ENCODE measurements at regions of chr5 and their contacts with region 1.

Region 1: GRCh38 chr5:116137544-116138378 is 52.9 kb downstream of the COMMD10 start:
- DNase-seq: peak; percentile 12
- ATAC-seq: peak; percentile 72
- H3K4me3 ChIP-seq: no peak overlapping the region
- H3K27ac ChIP-seq: no peak overlapping the region
- H3K4me1 ChIP-seq: peaks cover 3% of the 10 kb centered on the region; the same call in 1 of the 2 replicates
- H3K27me3 ChIP-seq: no peaks in the 10 kb centered on the region
- CTCF ChIP-seq: peak; percentile 55 to 70 (median 62); a peak in 5 of 6 replicates
- EP300 ChIP-seq: no peak
- POLR2A ChIP-seq: no peak
- RAD21 ChIP-seq: peak; percentile 95

Region 2: GRCh38 chr5:116062352-116062751 is 75.4 kb before region 1 on chr5:
- CTCF ChIA-PET with region 1: no interaction called
- POLR2A ChIA-PET with region 1: no interaction called
- RAD21 ChIA-PET with region 1: no interaction called
- SMC1A ChIA-PET with region 1: no interaction called
- in situ Hi-C with region 1: no loop called
- intact Hi-C with region 1: no loop called
- DNase-seq: no peak
- ATAC-seq: no peak
- H3K4me3 ChIP-seq: no peak overlapping the region
- H3K27ac ChIP-seq: no peak overlapping the region
- H3K4me1 ChIP-seq: no peaks in the 10 kb centered on the region
- H3K27me3 ChIP-seq: no peaks in the 10 kb centered on the region; a peak in 2 of 4 replicates
- CTCF ChIP-seq: no peak
- EP300 ChIP-seq: no peak
- POLR2A ChIP-seq: no peak
- RAD21 ChIP-seq: peak; percentile 14; the same call in 1 of the 2 replicates

Region 3: GRCh38 chr5:116273448-116274207 is 135.9 kb after region 1 on chr5:
- CTCF ChIA-PET with region 1: interaction called, 36 read pairs
- POLR2A ChIA-PET with region 1: no interaction called
- RAD21 ChIA-PET with region 1: interaction called, 11 read pairs
- SMC1A ChIA-PET with region 1: interaction called, 39 read pairs
- in situ Hi-C with region 1: no loop called
- intact Hi-C with region 1: loop called (anchors 1 kb)
- DNase-seq: peak; percentile 43
- ATAC-seq: peak; percentile 90
- H3K4me3 ChIP-seq: no peak overlapping the region
- H3K27ac ChIP-seq: no peak overlapping the region
- H3K4me1 ChIP-seq: no peaks in the 10 kb centered on the region
- H3K27me3 ChIP-seq: no peaks in the 10 kb centered on the region
- CTCF ChIP-seq: no peak
- EP300 ChIP-seq: peak; percentile 36 to 68; a peak in 1 of 4 replicates
- POLR2A ChIP-seq: no peak
- RAD21 ChIP-seq: no peak

Region 4: GRCh38 chr5:116374434-116374852 is 236.7 kb after region 1 on chr5:
- CTCF ChIA-PET with region 1: interaction called, 16 read pairs
- POLR2A ChIA-PET with region 1: no interaction called
- RAD21 ChIA-PET with region 1: interaction called, 21 read pairs
- SMC1A ChIA-PET with region 1: interaction called, 58 read pairs
- in situ Hi-C with region 1: no loop called
- intact Hi-C with region 1: no loop called
- DNase-seq: peak; percentile 64
- ATAC-seq: peak; percentile 82
- H3K4me3 ChIP-seq: no peak overlapping the region
- H3K27ac ChIP-seq: no peak overlapping the region
- H3K4me1 ChIP-seq: peaks cover 7% of the 10 kb centered on the region
- H3K27me3 ChIP-seq: no peaks in the 10 kb centered on the region
- CTCF ChIP-seq: no peak
- EP300 ChIP-seq: 0 out of 4 replicates have a peak, but pooled peaks of 1 of the 2 experiments have one; percentile 22
- POLR2A ChIP-seq: no peak
- RAD21 ChIP-seq: no peak

Region 5: GRCh38 chr5:116454417-116454927 is 316.7 kb after region 1 on chr5:
- CTCF ChIA-PET with region 1: interaction called, 6 read pairs
- POLR2A ChIA-PET with region 1: no interaction called
- RAD21 ChIA-PET with region 1: interaction called, 4 read pairs
- SMC1A ChIA-PET with region 1: interaction called, 8 read pairs
- in situ Hi-C with region 1: no loop called
- intact Hi-C with region 1: loop called (anchors 10 kb)
- DNase-seq: peak; percentile 63
- ATAC-seq: peak; percentile 97
- H3K4me3 ChIP-seq: no peak overlapping the region
- H3K27ac ChIP-seq: no peak overlapping the region
- H3K4me1 ChIP-seq: peaks cover 10% of the 10 kb centered on the region
- H3K27me3 ChIP-seq: no peaks in the 10 kb centered on the region
- CTCF ChIP-seq: no peak
- EP300 ChIP-seq: no peak
- POLR2A ChIP-seq: no peak
- RAD21 ChIP-seq: 0 out of 2 replicates have a peak, but pooled peaks have one; percentile 3

Region 6: GRCh38 chr5:116492016-116492623 is 354.4 kb after region 1 on chr5:
- CTCF ChIA-PET with region 1: interaction called, 14 read pairs
- POLR2A ChIA-PET with region 1: no interaction called
- RAD21 ChIA-PET with region 1: interaction called, 17 read pairs
- SMC1A ChIA-PET with region 1: interaction called, 24 read pairs
- in situ Hi-C with region 1: no loop called
- intact Hi-C with region 1: no loop called
- DNase-seq: no peak
- ATAC-seq: peak; percentile 85
- H3K4me3 ChIP-seq: no peak overlapping the region
- H3K27ac ChIP-seq: no peak overlapping the region
- H3K4me1 ChIP-seq: no peaks in the 10 kb centered on the region; the same call in 1 of the 2 replicates
- H3K27me3 ChIP-seq: no peaks in the 10 kb centered on the region
- CTCF ChIP-seq: no peak
- EP300 ChIP-seq: no peak
- POLR2A ChIP-seq: no peak
- RAD21 ChIP-seq: no peak

Region 7: DNA sequence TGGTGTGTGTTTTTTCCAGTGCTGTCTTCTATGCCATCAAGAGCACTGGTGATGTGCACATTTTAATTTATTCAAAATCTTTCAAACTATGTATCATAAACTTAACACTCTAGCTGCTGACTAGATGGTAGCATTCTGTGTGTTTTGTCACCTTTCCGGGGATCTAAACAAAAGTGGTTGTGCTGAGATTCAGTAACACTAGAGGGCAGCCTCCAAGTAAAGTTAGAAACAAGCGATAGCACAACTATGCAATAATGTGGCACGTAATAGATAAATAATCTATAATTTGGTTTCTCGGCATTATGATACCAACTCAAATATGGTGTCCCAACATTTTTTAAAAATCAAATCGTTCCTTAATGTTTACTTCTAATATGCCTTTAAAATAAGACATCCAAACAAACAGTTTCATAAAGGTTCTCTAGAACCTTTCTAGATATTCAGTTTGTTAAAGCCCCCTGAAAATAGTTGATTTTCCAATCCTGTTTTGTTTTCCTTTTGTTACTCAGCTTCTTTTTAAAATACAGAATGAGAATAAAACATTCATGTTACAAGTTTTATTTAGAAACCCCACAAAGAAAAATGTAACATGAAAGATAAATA is 420.0 kb after region 1 on chr5:
- CTCF ChIA-PET with region 1: interaction called, 31 read pairs
- POLR2A ChIA-PET with region 1: no interaction called
- RAD21 ChIA-PET with region 1: interaction called, 5 read pairs
- SMC1A ChIA-PET with region 1: interaction called, 21 read pairs
- in situ Hi-C with region 1: loop called (anchors 25 kb)
- intact Hi-C with region 1: loop called (anchors 5 kb)
- DNase-seq: no peak
- ATAC-seq: peak; percentile 65
- H3K4me3 ChIP-seq: no peak overlapping the region
- H3K27ac ChIP-seq: no peak overlapping the region
- H3K4me1 ChIP-seq: no peaks in the 10 kb centered on the region
- H3K27me3 ChIP-seq: no peaks in the 10 kb centered on the region
- CTCF ChIP-seq: peak; percentile 48 to 61 (median 55); a peak in 5 of 6 replicates
- EP300 ChIP-seq: no peak
- POLR2A ChIP-seq: no peak
- RAD21 ChIP-seq: peak; percentile 79